ENCODE measurements at regions of chr10 and their contacts with region 1.

Region 1: GRCh38 chr10:54009672-54010071 is 791.4 kb downstream of the PCDH15 start:
- DNase-seq: peak; percentile 45

Region 2: GRCh38 chr10:53977267-53977666 is 32.4 kb before region 1 on chr10:
- intact Hi-C with region 1: no loop called
- DNase-seq: no peak

Region 3: GRCh38 chr10:54342058-54342457 is 332.4 kb after region 1 on chr10:
- intact Hi-C with region 1: no loop called
- DNase-seq: no peak

Region 4: GRCh38 chr10:55704944-55705343 is 1695.3 kb after region 1 on chr10:
- intact Hi-C with region 1: loop called in 1 of 2 experiments (anchors 5 kb)
- DNase-seq: no peak

Measured in posterior vena cava (tissue), 2 donors.